ENCODE measurements at regions of chr12 and their contacts with region 1.

Region 1: DNA sequence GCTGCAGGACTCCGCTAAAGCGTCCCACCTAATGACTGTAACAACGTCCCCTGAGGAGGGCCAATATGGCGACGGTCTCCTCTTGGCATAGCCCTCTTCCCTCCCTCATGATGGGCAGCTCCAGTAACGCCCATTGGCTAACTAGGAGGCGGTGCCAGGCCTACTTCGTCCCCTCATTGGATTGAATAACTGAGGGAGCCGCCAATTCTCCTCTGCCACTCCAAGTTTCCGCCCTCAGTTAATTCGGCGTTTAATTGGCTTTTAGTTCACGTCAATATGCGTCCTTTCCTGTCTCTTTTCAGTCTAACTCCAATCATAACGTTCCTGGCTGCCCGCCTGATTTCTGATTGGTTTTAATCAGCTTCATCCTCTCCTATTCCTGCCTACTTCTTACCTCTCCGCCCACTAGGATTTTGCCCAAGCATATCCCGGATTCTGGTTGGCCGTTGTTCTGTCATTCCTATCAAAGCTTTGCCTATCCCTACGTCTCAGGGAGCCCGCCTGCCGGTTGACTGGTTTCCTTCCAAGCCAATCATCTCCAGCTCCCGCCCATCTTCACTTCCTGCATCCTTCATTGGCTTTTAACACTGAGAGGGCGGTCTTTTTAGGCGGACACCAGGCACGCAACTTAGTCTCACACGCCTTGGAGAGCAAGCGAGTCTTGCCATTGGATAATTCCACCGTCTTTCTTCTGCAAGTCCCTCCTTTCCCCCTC is 430 bp upstream of the SP1 start:
- DNase-seq: peak; percentile 98 to 100
- H3K4me3 ChIP-seq: peak overlapping the region; percentile 76
- H3K27ac ChIP-seq: peak overlapping the region; percentile 83
- H3K4me1 ChIP-seq: peaks cover 40% of the 10 kb centered on the region
- H3K27me3 ChIP-seq: no peaks in the 10 kb centered on the region
- CTCF ChIP-seq: no peak

Region 2: DNA sequence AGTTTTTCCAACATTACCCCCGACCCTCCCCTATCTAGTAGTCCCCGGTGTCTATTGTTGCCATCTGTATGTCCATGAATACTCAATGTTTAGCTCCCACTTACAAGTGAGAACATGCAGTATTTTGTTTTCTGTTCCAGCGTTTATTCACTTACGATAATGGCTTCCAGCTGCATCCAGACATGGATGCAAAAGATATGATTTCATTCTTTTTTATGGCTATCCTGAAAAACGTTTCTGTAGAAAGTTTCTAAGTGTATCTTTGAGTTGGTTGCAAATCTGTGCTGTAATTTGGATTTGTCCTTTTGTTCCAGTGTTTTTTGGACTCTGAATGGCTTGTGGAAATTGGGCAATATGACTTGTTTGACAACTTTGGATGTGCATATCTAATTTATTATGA is 12.2 kb after region 1 on chr12:
- CTCF ChIA-PET with region 1: no interaction called
- POLR2A ChIA-PET with region 1: interaction called, 10 read pairs
- intact Hi-C with region 1: no loop called
- DNase-seq: no peak
- H3K4me3 ChIP-seq: no peak overlapping the region
- H3K27ac ChIP-seq: no peak overlapping the region
- H3K4me1 ChIP-seq: peaks cover 42% of the 10 kb centered on the region
- H3K27me3 ChIP-seq: no peaks in the 10 kb centered on the region
- CTCF ChIP-seq: no peak

Region 3: GRCh38 chr12:53427905-53428594 is 48.5 kb after region 1 on chr12:
- CTCF ChIA-PET with region 1: no interaction called
- POLR2A ChIA-PET with region 1: no interaction called
- intact Hi-C with region 1: loop called (anchors 5 kb)
- DNase-seq: peak; percentile 54 to 91
- H3K4me3 ChIP-seq: no peak overlapping the region
- H3K27ac ChIP-seq: peak overlapping the region; percentile 28
- H3K4me1 ChIP-seq: peaks cover 27% of the 10 kb centered on the region
- H3K27me3 ChIP-seq: no peaks in the 10 kb centered on the region
- CTCF ChIP-seq: no peak

Measured in PC-9 (cell line).